Dorsolateral prefrontal cortex (tissue), 120 donors: ENCODE measurements at regions of chr1 and their contacts with region 1.

Region 1: DNA sequence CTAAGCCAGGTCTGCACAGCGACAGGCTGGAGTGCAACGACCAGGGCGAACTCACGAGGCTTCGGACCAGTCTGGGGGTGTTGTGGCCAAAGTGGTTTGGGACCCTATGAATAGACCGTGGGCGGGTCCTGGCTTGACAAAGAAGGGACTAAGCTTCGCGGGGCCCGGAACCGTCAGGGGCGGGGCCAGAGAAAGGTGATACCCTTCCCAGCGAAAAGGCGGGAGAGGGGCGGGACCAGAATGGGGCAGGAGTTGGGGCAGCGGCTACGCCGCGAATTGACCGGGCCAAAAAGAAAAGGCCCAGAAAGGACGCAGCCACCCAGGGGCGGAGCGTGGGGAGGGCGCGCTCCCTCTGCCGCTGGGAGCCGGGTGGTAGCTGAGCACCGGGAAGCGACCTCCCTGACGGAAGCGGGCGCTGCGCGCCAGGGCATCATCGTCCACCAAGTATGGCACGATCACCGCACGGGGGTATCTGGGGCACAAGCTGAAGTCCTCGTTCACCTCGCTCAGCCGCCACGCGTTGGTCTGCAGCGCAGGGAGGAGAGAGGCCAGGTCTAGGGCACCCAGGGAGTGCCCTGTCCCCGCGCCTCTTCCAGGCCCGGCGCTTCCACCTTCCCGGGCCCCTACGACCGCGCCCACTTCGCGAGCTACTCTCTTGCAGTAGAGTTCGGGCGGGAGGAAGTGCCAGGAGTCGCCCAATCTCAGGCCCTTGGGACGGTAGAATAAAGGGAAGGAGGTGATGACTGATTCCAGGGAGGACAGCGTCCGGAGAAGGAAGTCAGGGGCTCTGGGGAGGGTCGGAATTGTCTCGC is 6.7 kb upstream of the FAM167B start:
- DNase-seq: peak; percentile 56 to 81 (median 66)
- H3K4me3 ChIP-seq: peak overlapping the region; percentile 50 to 90 (median 74)
- H3K27ac ChIP-seq: peak overlapping the region in 57 of 59 donors; percentile 19 to 86 (median 76)
- H3K27me3 ChIP-seq: no peaks in the 10 kb centered on the region
- CTCF ChIP-seq: peak in 53 of 56 donors; percentile 12 to 64 (median 46)

Region 2: DNA sequence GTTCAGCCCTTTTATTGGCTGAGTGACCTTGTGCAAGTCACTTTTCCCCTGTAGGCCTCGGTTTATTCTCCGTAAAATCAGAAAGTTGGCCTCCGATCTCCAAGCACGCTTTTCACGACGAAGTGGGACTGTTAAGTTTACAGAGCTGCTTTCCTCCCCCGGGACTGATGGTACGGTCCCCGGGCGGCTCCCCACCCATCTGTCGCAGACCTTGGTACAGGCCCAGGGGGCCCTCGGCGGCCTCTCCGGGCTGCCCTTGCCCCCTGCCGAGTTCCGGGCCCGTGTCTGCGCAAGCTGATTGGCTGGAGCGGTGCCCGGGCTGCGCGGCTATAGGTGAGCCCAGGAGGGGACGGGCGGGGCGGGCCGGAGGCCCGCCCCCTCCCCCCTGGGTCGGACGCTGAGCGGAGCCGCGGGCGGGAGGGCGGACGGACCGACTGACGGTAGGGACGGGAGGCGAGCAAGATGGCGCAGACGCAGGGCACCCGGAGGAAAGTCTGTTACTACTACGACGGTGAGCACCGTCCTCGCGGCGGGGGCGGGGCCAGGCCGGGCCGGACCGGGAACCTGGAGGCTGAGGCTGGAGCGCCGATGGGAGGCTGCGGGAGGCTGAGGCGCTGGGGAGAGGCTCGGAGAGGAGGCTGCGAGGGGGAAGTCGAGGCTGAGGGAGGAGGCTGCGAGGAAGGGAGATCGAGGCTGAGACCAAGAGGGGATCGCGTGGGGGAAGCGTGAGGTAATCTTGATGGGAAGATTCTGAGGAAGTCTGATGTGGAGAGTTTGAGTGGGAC is 51.6 kb after region 1 on chr1 and contains the start of gene HDAC1:
- intact Hi-C with region 1: loop called in 1 of 2 experiments (anchors 5 kb)
- DNase-seq: peak; percentile 46 to 90 (median 85)
- H3K4me3 ChIP-seq: peak within 1 kb of the TSS; percentile 45 to 95 (median 80)
- H3K27ac ChIP-seq: peak within 1 kb of the TSS in 56 of 59 donors; percentile 1 to 92 (median 74)
- H3K27me3 ChIP-seq: peaks cover 0 to 5% (median 0%) of the 10 kb centered on the region in 45 donors
- CTCF ChIP-seq: peak in 13 of 56 donors; percentile 2 to 45 (median 12)
- total RNA-seq, gene HDAC1: 16.3 to 56.0 (median 29.8) TPM

Region 3: DNA sequence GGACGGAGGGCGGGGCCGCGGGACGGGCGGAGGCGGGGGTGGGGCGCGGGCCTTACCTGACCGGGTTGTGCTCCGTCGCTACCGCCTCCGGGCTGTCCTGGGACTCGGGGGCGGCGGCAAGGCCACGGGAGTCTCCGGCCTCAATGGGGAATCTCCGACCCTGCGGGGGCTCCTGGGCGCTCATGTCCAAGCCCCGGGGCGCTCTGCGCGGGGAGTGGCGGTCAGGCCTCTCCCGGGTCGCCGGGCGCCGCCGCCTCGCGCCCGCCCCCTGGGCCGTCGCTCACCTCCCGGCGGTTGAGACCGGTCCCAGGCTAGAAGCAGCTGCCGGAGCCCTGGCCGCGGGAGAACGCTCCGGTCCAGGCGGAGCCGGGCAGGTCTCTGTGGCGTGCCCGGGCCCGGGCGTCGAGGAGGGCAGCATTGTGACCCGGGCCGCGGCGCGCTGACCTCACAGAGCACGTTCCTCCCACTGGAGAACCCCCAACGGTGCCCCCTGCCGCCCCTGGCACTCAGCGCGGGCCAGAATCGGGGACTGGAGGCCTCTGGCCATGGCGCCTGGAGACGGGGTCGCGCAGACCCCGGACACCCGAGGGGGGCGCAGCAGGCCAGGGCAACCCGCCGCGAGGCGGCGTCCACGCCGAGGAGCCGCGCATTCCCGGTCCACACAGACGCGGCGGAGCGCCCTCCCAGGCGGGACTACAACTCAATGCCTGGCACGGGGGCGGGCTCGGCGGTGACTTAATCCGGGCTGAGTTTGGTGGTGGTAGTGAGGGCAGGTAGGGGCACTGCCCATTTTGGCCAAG is 121.5 kb after region 1 on chr1:
- intact Hi-C with region 1: loop called (anchors 2 to 5 kb)
- DNase-seq: peak; percentile 42 to 82 (median 74)
- H3K4me3 ChIP-seq: peak overlapping the region; percentile 28 to 69 (median 52)
- H3K27ac ChIP-seq: peak overlapping the region; percentile 22 to 91 (median 78)
- H3K27me3 ChIP-seq: no peaks in the 10 kb centered on the region
- CTCF ChIP-seq: peak in 55 of 56 donors; percentile 37 to 95 (median 69)

Region 4: GRCh38 chr1:32438136-32438535 is 197.8 kb after region 1 on chr1:
- intact Hi-C with region 1: no loop called
- DNase-seq: no peak
- H3K4me3 ChIP-seq: no peak overlapping the region
- H3K27ac ChIP-seq: no peak overlapping the region
- H3K27me3 ChIP-seq: peaks cover 0 to 9% (median 0%) of the 10 kb centered on the region in 45 donors
- CTCF ChIP-seq: no peak